ENCODE measurements at regions of chr17 and their contacts with region 1.

Region 1: GRCh38 chr17:7583253-7584109 is at the start of gene MPDU1:
- DNase-seq: peak; percentile 73
- H3K4me3 ChIP-seq: peak within 1 kb of the TSS; percentile 81
- CTCF ChIP-seq: no peak

Region 2: DNA sequence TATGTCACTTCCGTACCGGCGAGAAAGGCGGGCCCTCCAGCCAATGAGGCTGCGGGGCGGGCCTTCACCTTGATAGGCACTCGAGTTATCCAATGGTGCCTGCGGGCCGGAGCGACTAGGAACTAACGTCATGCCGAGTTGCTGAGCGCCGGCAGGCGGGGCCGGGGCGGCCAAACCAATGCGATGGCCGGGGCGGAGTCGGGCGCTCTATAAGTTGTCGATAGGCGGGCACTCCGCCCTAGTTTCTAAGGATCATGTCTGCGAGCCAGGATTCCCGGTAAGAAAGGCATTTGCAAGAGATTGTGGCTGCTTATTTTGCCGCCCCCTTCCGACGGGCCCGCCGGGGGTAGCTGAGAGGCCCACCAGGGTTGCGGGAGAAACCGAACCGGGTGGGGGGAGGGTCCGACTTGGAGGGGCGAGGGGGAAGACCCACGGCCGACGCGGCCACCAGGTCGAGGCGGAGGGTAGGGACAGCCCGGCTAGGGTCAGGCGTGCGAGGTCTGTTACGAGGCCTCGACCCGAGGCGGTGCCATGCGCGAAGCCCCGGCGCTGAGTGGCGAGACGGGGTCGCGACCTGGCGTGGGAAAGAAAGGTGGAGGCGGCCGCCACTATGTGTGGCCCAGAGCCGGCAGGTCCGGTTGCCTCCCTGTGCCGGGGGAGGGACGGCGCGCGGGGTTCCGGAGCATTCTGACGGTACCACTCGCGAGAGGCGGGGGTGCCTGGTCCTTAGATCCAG is 10.7 kb before region 1 on chr17:
- CTCF ChIA-PET with region 1: interaction called, 37 read pairs
- POLR2A ChIA-PET with region 1: interaction called, 45 read pairs
- DNase-seq: no peak
- H3K4me3 ChIP-seq: peak overlapping the region; percentile 100
- CTCF ChIP-seq: no peak